Activated naive CD4-positive, alpha-beta T cell treated with anti-CD3 and anti-CD28 coated beads, Interleukin-2, amount 10 ng/mL, durations not matched to agents 7 days and 5 days (primary cell): ENCODE measurements at regions of chr7 and their contacts with region 1.

Region 1: DNA sequence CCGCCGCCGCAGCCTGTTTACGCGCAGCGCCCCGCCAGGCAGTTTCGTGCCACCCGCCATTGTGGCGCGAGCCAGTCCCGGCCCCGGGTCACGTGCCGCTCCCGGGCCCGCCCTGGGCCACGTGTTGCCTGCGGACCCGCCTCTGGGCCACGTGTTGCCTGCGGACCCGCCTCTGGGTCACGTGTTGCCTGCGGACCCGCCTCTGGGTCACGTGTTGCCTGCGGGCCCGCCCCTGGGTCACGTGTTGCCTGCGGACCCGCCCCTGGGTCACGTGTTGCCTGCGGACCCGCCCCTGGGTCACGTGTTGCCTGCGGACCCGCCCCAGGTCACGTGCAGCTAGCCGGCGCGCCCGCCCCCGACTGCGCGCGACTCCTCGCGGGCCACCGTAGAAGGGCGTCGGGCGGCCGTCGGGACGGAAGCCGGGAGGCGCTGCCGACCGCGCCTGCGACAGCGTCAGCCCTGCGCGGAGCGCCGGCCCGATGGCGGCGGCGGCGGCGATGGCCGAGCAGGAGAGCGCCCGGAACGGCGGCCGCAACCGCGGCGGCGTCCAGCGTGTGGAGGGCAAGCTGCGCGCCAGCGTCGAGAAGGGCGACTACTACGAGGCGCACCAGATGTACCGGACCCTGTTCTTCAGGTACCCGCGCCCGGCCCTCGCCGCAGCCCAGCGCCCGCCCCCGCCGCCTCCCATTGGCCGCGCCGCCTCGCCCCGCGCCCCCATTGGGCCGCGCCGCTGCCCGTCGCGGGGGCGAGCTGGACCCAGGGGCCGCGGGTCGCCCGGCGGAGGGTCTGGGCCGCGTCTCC is at the start of gene GET4:
- DNase-seq: peak; percentile 96
- H3K4me3 Mint-ChIP-seq: peak within 1 kb of the TSS; percentile 97
- H3K27ac Mint-ChIP-seq: peak within 1 kb of the TSS; percentile 93
- H3K4me1 Mint-ChIP-seq: peaks cover 34% of the 10 kb centered on the region
- H3K27me3 Mint-ChIP-seq: no peaks in the 10 kb centered on the region

Region 2: DNA sequence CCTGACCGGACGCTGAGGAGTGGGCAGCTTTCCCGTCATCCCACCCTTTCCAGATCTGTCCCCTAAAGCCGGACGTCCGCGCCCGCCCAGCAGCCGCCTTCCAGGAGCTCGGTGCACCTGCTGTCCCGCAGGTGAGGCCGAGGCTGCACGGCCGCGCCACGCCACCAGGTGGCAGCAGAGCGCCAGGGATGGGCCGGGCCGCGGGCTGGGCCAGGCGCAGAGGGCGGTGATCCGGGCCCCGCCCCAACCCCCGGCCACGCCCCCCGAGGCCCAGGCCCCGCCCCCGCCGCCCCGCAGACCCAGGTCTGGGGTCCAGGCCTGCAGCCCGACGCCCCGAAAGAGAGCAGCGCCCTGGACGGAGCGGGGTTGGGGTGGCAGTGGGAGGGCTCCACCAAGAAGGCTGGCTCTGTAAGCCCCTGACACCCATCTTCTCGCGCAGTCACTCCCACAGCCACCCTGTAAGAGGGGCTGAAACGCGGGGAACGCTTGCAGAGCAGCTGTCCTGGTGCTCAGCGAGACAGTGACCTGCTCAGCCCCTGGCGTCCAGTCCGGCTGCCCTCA is 554.2 kb before region 1 on chr7:
- CTCF ChIA-PET with region 1: interaction called, 11 read pairs
- DNase-seq: peak; percentile 85
- H3K4me3 Mint-ChIP-seq: no peak overlapping the region
- H3K27ac Mint-ChIP-seq: no peak overlapping the region
- H3K4me1 Mint-ChIP-seq: no peaks in the 10 kb centered on the region
- H3K27me3 Mint-ChIP-seq: peaks cover 54% of the 10 kb centered on the region

Region 3: GRCh38 chr7:786472-787255 is 89.7 kb before region 1 on chr7:
- CTCF ChIA-PET with region 1: interaction called, 89 read pairs
- DNase-seq: peak; percentile 80
- H3K4me3 Mint-ChIP-seq: no peak overlapping the region
- H3K27ac Mint-ChIP-seq: no peak overlapping the region
- H3K4me1 Mint-ChIP-seq: peaks cover 3% of the 10 kb centered on the region
- H3K27me3 Mint-ChIP-seq: no peaks in the 10 kb centered on the region

Region 4: DNA sequence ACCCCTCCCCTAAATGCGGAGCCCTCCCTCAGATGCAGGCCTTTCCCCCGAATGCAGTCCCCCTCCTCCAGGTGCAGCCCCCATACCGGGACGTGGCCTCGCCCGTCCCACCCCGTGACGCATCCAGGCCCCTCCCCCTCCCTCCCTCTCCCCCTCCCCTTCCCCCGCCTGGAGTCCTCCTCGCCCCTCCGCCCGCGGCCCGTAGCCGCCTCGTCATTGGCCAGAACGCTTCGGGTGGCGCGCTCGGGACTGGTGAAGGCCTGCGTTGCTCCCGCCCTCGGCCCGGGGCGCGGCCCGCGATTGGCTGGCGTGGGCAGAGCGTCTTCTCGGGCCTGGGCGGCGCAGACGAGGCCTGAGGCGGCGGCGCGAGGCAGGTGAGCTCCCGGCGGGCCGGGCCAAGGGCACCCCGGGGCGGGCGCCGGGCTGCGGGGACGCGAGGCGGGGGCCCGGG is 60.0 kb before region 1 on chr7:
- CTCF ChIA-PET with region 1: interaction called, 11 read pairs
- DNase-seq: peak; percentile 98
- H3K4me3 Mint-ChIP-seq: peak overlapping the region; percentile 79
- H3K27ac Mint-ChIP-seq: no peak overlapping the region
- H3K4me1 Mint-ChIP-seq: peaks cover 64% of the 10 kb centered on the region
- H3K27me3 Mint-ChIP-seq: peaks cover 52% of the 10 kb centered on the region

Region 5: DNA sequence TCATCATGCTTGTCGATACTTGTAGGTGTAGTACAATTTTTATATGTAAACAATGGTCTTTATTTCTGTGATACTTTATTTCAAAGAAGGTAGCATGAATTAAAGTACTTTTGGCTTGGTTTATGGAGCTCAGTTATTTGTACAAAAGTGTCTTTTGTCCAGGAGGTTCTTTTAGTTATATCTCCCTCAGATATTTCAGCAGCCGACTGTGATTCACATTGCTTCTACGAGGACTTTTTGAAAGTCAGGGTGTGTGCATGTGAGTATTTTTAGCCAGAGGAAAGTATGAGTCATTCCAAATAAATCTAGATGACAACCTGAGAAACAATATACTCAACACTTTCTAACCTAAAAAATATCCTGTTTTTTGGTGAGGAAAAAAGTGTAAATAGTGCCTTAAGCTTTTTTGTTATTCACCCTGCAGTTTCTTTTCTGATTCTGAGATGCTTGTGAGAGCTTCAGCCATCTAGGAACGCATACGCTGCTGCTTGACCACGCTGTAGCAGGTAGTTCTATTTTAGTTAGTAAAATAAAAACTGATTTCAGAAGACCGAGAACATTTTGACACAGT is 44.7 kb before region 1 on chr7:
- CTCF ChIA-PET with region 1: interaction called, 13 read pairs
- DNase-seq: peak; percentile 39
- H3K4me3 Mint-ChIP-seq: peak overlapping the region; percentile 70
- H3K27ac Mint-ChIP-seq: peak overlapping the region; percentile 95
- H3K4me1 Mint-ChIP-seq: peaks cover 71% of the 10 kb centered on the region
- H3K27me3 Mint-ChIP-seq: no peaks in the 10 kb centered on the region

Region 6: GRCh38 chr7:836411-837400 is 39.7 kb before region 1 on chr7:
- CTCF ChIA-PET with region 1: interaction called, 13 read pairs
- DNase-seq: no peak
- H3K4me3 Mint-ChIP-seq: no peak overlapping the region
- H3K27ac Mint-ChIP-seq: peak overlapping the region; percentile 57
- H3K4me1 Mint-ChIP-seq: peaks cover 44% of the 10 kb centered on the region
- H3K27me3 Mint-ChIP-seq: no peaks in the 10 kb centered on the region

Region 7: DNA sequence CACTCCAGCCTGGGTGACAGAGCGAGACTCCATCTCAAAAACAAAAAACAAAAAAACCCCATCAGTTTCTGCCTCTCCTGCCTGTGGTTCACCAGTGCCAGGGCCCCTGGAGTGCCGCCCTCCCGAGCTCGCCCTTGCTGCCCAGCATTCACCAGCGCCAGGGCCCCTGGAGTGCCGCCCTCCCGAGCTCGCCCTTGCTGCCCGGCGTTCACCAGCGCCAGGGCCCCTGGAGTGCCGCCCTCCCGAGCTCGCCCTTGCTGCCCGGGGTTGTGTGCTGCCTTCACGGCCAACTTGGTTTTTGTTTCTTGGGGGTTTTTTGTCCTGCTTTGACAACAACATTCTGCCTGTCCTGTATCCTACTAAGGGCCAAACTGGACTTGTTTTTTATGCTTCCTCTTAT is 13.3 kb before region 1 on chr7:
- CTCF ChIA-PET with region 1: interaction called, 10 read pairs
- DNase-seq: no peak
- H3K4me3 Mint-ChIP-seq: no peak overlapping the region
- H3K27ac Mint-ChIP-seq: no peak overlapping the region
- H3K4me1 Mint-ChIP-seq: no peaks in the 10 kb centered on the region
- H3K27me3 Mint-ChIP-seq: no peaks in the 10 kb centered on the region

Region 8: DNA sequence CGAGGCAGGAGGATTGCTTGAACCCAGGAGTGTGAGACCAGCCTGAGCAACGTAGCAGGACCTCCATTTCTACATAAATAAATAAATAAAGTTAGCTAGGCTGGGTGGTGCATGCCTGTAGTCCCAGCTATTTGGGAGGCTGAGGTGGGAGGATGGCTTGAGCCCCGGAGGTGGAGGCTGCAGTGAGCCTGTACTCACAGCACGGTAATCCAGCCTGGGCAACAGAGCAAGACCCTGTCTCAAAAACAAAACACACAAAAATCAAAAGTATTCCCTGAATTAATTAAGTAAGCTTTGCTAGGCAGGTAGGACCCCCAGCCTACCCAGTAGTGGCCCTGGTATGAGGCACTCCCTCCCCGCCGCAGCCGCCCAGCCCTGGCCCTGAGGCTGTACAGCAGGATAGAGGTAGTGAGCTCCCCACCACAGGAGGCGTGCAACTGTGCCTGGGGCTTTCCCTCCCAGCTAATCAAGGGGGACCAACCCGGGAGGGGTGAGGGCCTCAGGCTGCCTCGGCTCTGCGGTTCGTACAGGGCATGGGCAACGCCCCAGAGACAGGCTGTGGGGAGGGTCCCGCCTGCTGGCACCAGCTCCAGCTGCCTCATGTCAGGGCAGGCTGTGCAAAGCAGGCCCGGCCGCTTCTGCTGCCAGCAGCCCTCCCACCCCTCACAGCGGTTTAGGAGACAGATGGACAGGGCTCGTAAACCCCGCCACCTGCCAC is 105.6 kb after region 1 on chr7:
- CTCF ChIA-PET with region 1: no interaction called
- DNase-seq: no peak
- H3K4me3 Mint-ChIP-seq: no peak overlapping the region
- H3K27ac Mint-ChIP-seq: no peak overlapping the region
- H3K4me1 Mint-ChIP-seq: no peaks in the 10 kb centered on the region
- H3K27me3 Mint-ChIP-seq: peaks cover 14% of the 10 kb centered on the region